ENCODE measurements at regions of chr12 and their contacts with region 1.

Region 1: GRCh38 chr12:6851921-6852650 is at the start of gene USP5:
- DNase-seq: peak; percentile 100
- H3K4me3 ChIP-seq: peak within 1 kb of the TSS; percentile 69
- H3K4me3 Mint-ChIP-seq: peak within 1 kb of the TSS; percentile 94
- H3K27ac Mint-ChIP-seq: peak within 1 kb of the TSS; percentile 95
- H3K4me1 ChIP-seq: peaks cover 13% of the 10 kb centered on the region
- H3K4me1 Mint-ChIP-seq: peaks cover 19% of the 10 kb centered on the region
- H3K27me3 ChIP-seq: no peaks in the 10 kb centered on the region
- H3K27me3 Mint-ChIP-seq: no peaks in the 10 kb centered on the region
- CTCF ChIP-seq: no peak
- total RNA-seq, gene USP5: 226 and 230 TPM in 2 replicates

Region 2: DNA sequence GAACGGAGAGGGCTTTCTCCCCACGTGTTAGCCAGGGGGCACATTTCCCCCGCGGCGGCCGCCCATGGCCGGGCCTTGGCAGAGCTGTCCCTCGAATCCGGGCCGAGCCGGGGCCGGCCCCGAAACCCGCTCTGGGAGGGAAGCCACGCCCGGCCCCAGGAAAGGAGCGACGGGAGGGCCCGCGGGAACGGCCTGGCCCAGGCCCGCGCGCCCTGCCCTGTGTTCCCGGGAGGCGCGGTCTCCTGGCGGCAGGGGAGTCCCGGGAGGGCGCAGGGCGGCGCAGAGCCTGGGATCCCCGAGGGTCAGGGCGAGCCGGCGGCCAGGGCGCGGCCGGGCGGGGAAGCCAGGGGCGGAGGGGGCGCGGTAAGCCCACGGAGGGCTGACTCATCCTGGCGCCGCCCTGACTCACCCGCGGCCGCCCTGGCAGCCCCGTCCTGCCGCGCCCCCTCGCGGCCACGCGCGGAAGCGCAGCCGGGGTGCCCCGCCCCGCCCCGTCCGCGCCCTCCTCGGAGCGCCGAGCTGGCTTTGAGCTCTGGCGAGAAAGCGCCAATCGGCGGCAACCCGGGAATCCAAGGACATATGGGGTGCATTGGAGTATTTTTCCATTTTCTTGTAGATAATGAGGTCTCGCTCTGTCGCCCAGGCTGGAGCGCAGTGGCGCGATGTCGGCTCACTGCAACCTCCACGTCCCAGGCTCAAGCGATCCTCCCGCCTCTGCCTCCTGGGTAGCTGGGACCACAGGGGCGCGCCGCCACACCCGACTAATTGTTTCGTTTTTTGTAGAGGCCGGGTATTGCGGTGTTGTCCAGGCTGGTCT is 573.4 kb before region 1 on chr12:
- CTCF ChIA-PET with region 1: no interaction called
- POLR2A ChIA-PET with region 1: no interaction called
- intact Hi-C with region 1: no loop called
- DNase-seq: peak; percentile 89 to 97
- H3K4me3 ChIP-seq: peak overlapping the region; percentile 52
- H3K4me3 Mint-ChIP-seq: peak overlapping the region; percentile 80
- H3K27ac Mint-ChIP-seq: peak overlapping the region; percentile 93
- H3K4me1 ChIP-seq: peaks cover 23% of the 10 kb centered on the region
- H3K4me1 Mint-ChIP-seq: peaks cover 42% of the 10 kb centered on the region
- H3K27me3 ChIP-seq: no peaks in the 10 kb centered on the region
- H3K27me3 Mint-ChIP-seq: no peaks in the 10 kb centered on the region
- CTCF ChIP-seq: peak; percentile 34 to 99

Region 3: DNA sequence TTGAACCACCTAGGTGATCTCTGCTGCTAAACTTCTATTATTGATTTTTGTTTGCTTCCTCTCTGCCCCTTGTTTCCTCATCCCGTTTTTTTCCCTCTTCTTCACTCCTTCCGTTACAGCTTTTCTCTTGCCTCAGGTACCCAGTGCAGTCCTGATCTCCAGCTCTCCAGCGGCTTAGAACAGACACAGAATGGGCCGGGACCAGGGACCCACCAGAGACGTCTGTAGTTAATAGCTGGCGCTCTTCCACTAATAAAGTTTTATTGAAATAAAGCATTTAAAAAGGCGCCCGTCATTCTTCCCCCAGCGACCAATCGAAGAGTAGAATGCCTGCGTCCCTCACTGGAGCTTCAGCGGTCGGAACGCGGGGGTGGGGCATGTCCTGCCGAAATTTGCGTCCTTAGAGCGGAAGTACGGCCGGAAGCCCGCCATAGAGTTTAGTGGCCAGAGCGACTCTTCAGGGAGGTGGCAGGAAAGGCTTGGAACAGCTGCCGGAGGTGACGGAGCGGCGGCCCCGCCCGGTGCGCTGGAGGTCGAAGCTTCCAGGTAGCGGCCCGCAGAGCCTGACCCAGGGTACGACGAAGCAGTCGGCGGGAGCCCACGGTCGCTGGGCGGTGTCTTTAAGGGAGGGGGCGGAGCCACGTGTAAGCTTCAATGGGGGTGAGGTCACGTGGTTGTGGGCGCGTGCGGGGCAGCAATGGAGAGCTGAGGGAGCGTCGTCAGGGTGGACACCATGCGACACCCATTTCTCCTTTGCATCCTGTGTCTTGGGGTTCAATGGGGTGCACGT is 128.3 kb before region 1 on chr12 and contains the start of gene COPS7A:
- CTCF ChIA-PET with region 1: interaction called, 4 read pairs
- POLR2A ChIA-PET with region 1: interaction called, 32 read pairs
- intact Hi-C with region 1: no loop called
- DNase-seq: peak; percentile 100
- H3K4me3 ChIP-seq: peak within 1 kb of the TSS; percentile 63
- H3K4me3 Mint-ChIP-seq: peak within 1 kb of the TSS; percentile 73
- H3K27ac Mint-ChIP-seq: peak within 1 kb of the TSS; percentile 80
- H3K4me1 ChIP-seq: peaks cover 11% of the 10 kb centered on the region; the same call in 1 of the 2 replicates
- H3K4me1 Mint-ChIP-seq: peaks cover 11% of the 10 kb centered on the region
- H3K27me3 ChIP-seq: no peaks in the 10 kb centered on the region
- H3K27me3 Mint-ChIP-seq: no peaks in the 10 kb centered on the region
- CTCF ChIP-seq: no peak
- total RNA-seq, gene COPS7A: 56.8 and 61.9 TPM in 2 replicates

Region 4: DNA sequence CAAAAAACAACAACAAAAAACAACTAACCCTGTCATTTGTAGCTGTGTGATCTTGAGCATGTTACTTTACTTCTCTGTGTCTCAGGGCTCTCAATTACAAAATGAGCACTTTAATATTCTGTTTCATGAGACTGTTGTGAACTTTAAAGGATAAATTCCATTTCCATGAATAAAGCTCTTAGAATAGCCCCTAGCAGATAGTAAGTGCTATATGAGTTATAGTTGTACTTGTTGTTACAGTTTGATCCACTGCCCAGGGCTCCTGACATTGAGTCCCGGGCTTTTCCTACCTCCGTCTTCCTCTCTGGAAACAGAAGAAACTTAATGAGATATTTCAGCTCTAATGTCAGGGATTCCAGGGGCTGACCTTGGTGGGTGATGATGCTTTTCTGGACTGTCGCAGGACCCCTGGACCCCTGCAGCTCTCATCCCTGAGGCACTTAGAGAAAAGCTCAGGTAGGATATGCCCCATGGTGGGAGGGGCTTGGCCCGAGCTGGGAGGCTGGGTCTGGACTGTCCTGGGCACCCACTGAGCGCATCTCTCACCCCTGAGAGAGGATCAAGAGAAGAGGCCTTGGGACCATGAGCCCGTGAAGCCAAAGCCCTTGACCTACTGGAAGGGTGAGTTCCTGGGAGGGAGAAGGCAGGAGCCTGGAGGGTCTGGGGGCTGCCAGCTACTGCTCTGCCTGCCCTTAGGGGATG is 18.7 kb before region 1 on chr12:
- CTCF ChIA-PET with region 1: interaction called, 14 read pairs
- POLR2A ChIA-PET with region 1: interaction called, 9 read pairs
- intact Hi-C with region 1: loop called (anchors 1 kb)
- DNase-seq: no peak
- H3K4me3 ChIP-seq: no peak overlapping the region
- H3K4me3 Mint-ChIP-seq: no peak overlapping the region
- H3K27ac Mint-ChIP-seq: no peak overlapping the region
- H3K4me1 ChIP-seq: peaks cover 14% of the 10 kb centered on the region
- H3K4me1 Mint-ChIP-seq: peaks cover 21% of the 10 kb centered on the region
- H3K27me3 ChIP-seq: no peaks in the 10 kb centered on the region; the same call in 1 of the 2 replicates
- H3K27me3 Mint-ChIP-seq: no peaks in the 10 kb centered on the region
- CTCF ChIP-seq: no peak

Region 5: GRCh38 chr12:6867413-6868210 is 15.5 kb after region 1 on chr12 and contains the start of gene TPI1:
- CTCF ChIA-PET with region 1: interaction called, 65 read pairs
- POLR2A ChIA-PET with region 1: interaction called, 102 read pairs
- intact Hi-C with region 1: loop called (anchors 1 kb)
- DNase-seq: peak; percentile 88 to 92
- H3K4me3 ChIP-seq: peak within 1 kb of the TSS; percentile 97
- H3K4me3 Mint-ChIP-seq: peak within 1 kb of the TSS; percentile 95
- H3K27ac Mint-ChIP-seq: peak within 1 kb of the TSS; percentile 94
- H3K4me1 ChIP-seq: peaks cover 31% of the 10 kb centered on the region
- H3K4me1 Mint-ChIP-seq: peaks cover 47% of the 10 kb centered on the region
- H3K27me3 ChIP-seq: no peaks in the 10 kb centered on the region
- H3K27me3 Mint-ChIP-seq: no peaks in the 10 kb centered on the region
- CTCF ChIP-seq: no peak
- total RNA-seq, gene TPI1: 1,141 and 1,254 TPM in 2 replicates

Region 6: DNA sequence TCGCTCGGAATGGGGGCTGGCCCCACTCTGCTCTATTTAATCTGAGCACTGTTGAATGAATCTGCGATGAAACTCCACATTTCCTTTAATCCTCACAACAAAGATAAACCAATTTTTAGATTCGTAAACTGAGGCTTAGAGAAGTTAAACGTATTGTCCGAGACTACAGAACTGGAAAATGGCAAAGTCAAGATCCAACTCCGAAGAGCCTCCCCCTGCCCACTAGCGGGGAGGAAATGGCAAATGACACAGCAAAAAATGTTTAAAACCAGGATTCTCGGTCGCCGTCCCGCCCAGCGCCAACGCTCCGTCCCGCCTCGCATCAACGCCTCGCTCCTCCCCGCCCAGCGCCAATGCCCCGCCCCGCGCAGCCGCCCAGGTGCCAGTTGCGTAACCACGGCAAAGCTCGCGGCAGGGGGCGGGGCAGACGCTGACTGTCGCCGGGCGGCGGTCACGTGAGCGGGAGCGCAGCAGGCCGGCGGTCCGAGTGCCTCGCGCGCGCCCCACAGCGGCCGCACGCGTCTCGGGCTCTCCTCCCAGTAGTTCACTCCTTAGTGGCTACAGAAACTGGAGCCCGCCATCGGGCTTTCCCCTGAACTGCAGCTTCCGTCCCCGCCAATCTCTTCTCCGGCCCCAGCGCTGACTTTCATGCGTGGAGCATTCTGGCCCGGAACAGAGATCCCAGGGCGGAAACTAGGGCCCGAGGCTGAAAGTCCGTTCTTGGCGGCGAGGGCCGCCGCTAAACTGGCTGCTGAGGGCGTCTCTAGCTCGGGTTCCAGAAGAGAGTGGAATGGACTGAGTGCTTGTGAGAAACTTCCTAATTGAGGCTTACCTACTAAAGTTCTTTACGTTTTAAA is 38.9 kb after region 1 on chr12:
- CTCF ChIA-PET with region 1: interaction called, 19 read pairs
- POLR2A ChIA-PET with region 1: interaction called, 14 read pairs
- intact Hi-C with region 1: loop called (anchors 1 kb)
- DNase-seq: peak; percentile 98 to 100
- H3K4me3 ChIP-seq: peak overlapping the region; percentile 34
- H3K4me3 Mint-ChIP-seq: peak overlapping the region; percentile 80
- H3K27ac Mint-ChIP-seq: peak overlapping the region; percentile 96
- H3K4me1 ChIP-seq: peaks cover 37% of the 10 kb centered on the region
- H3K4me1 Mint-ChIP-seq: peaks cover 5% of the 10 kb centered on the region
- H3K27me3 ChIP-seq: no peaks in the 10 kb centered on the region
- H3K27me3 Mint-ChIP-seq: no peaks in the 10 kb centered on the region
- CTCF ChIP-seq: peak; percentile 82 to 95

Region 7: GRCh38 chr12:7054925-7055324 is 202.8 kb after region 1 on chr12:
- CTCF ChIA-PET with region 1: no interaction called
- POLR2A ChIA-PET with region 1: no interaction called
- intact Hi-C with region 1: no loop called
- DNase-seq: no peak
- H3K4me3 ChIP-seq: no peak overlapping the region
- H3K4me3 Mint-ChIP-seq: no peak overlapping the region
- H3K27ac Mint-ChIP-seq: no peak overlapping the region
- H3K4me1 ChIP-seq: peaks cover 14% of the 10 kb centered on the region
- H3K4me1 Mint-ChIP-seq: peaks cover 17% of the 10 kb centered on the region
- H3K27me3 ChIP-seq: no peaks in the 10 kb centered on the region
- H3K27me3 Mint-ChIP-seq: peaks cover 21% of the 10 kb centered on the region
- CTCF ChIP-seq: no peak

Region 8: GRCh38 chr12:7503686-7504415 is 651.8 kb after region 1 on chr12 and contains the start of gene CD163:
- CTCF ChIA-PET with region 1: no interaction called
- POLR2A ChIA-PET with region 1: no interaction called
- intact Hi-C with region 1: no loop called
- DNase-seq: no peak
- H3K4me3 ChIP-seq: no peak within 1 kb of the TSS
- H3K4me3 Mint-ChIP-seq: no peak within 1 kb of the TSS
- H3K27ac Mint-ChIP-seq: no peak within 1 kb of the TSS
- H3K4me1 ChIP-seq: no peaks in the 10 kb centered on the region
- H3K4me1 Mint-ChIP-seq: peaks cover 2% of the 10 kb centered on the region
- H3K27me3 ChIP-seq: no peaks in the 10 kb centered on the region
- H3K27me3 Mint-ChIP-seq: peaks cover 14% of the 10 kb centered on the region
- CTCF ChIP-seq: no peak
- total RNA-seq, gene CD163: 0.20 and 1.4 TPM in 2 replicates

Measured in Caco-2 (cell line).